ENCODE measurements at regions of chr14 and their contacts with region 1.

Region 1: DNA sequence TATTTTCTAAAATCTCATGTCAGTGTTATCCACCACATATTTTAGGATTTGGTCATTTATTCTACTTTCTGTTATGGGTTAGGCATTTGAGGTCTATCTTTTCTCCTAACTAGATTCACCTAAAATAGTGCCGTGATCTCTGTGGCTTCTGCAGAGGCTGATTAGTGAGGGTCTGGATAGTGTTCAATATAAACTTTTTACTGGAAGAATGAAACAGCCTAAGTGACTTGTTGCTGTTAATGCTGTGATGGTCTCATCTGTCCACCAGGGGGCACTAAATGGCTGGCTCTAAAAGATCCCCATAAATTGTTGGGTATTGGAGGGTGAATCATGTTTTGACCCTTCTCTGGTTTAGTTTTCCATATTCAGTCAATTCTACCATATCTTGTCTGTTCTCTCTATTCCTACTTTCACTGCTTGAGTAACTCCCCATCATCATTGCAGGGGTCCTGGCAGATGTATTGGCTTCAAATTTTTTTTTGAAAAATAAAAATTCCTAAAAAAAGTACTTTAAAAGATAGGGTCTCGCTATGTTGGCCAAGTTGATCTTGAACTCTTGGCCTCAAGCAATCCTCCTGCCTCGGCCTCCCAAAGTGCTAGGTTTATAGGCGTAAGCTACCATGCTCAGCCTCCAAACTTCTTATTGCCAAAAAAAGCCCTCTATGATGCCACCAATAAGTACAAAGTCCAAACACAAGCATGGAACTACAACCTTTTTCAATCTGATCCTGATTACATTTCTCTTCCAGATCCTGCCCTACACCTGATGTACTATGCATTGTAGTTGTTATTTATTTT is 6.9 kb downstream of the PABPN1 start:
- DNase-seq: peak; percentile 79
- ATAC-seq: peak; percentile 72
- H3K4me3 ChIP-seq: no peak overlapping the region
- H3K27ac ChIP-seq: no peak overlapping the region
- H3K4me1 ChIP-seq: peaks cover 4% of the 10 kb centered on the region
- H3K27me3 ChIP-seq: no peaks in the 10 kb centered on the region; the same call in 1 of the 2 replicates
- CTCF ChIP-seq: peak; percentile 92

Region 2: DNA sequence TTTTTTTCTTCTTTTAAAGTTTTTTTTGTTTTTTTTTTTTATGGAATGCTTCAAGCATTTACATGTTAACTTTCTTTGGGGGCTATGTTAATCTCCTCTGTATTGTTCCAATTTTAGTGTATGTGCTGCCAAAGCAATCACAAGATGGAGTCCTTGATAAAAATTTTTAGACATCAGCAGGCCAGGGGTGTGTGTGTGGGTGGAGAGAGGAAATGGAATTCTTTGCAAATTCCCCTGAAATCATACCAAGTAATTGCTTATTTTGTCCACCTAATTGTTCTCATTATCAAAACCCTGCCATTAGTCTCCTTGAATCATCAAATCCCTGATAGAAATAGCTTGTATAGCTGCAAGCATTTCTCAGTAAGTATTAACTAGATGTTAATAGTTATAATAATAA is 68.7 kb before region 1 on chr14:
- CTCF ChIA-PET with region 1: no interaction called
- POLR2A ChIA-PET with region 1: no interaction called
- intact Hi-C with region 1: loop called (anchors 2 kb)
- DNase-seq: no peak
- ATAC-seq: no peak
- H3K4me3 ChIP-seq: no peak overlapping the region
- H3K27ac ChIP-seq: no peak overlapping the region
- H3K4me1 ChIP-seq: no peaks in the 10 kb centered on the region
- H3K27me3 ChIP-seq: peaks cover 25% of the 10 kb centered on the region
- CTCF ChIP-seq: no peak

Region 3: GRCh38 chr14:23281247-23281646 is 46.9 kb before region 1 on chr14:
- CTCF ChIA-PET with region 1: no interaction called
- POLR2A ChIA-PET with region 1: no interaction called
- intact Hi-C with region 1: no loop called
- DNase-seq: no peak
- ATAC-seq: no peak
- H3K4me3 ChIP-seq: no peak overlapping the region
- H3K27ac ChIP-seq: no peak overlapping the region
- H3K4me1 ChIP-seq: peaks cover 13% of the 10 kb centered on the region
- H3K27me3 ChIP-seq: no peaks in the 10 kb centered on the region
- CTCF ChIP-seq: no peak

Region 4: GRCh38 chr14:23379366-23380196 is 51.4 kb after region 1 on chr14:
- CTCF ChIA-PET with region 1: interaction called, 6 read pairs
- POLR2A ChIA-PET with region 1: no interaction called
- intact Hi-C with region 1: loop called (anchors 1 kb)
- DNase-seq: peak; percentile 81
- ATAC-seq: peak; percentile 91
- H3K4me3 ChIP-seq: no peak overlapping the region
- H3K27ac ChIP-seq: no peak overlapping the region
- H3K4me1 ChIP-seq: no peaks in the 10 kb centered on the region
- H3K27me3 ChIP-seq: peaks cover 27% of the 10 kb centered on the region
- CTCF ChIP-seq: peak; percentile 94

Region 5: DNA sequence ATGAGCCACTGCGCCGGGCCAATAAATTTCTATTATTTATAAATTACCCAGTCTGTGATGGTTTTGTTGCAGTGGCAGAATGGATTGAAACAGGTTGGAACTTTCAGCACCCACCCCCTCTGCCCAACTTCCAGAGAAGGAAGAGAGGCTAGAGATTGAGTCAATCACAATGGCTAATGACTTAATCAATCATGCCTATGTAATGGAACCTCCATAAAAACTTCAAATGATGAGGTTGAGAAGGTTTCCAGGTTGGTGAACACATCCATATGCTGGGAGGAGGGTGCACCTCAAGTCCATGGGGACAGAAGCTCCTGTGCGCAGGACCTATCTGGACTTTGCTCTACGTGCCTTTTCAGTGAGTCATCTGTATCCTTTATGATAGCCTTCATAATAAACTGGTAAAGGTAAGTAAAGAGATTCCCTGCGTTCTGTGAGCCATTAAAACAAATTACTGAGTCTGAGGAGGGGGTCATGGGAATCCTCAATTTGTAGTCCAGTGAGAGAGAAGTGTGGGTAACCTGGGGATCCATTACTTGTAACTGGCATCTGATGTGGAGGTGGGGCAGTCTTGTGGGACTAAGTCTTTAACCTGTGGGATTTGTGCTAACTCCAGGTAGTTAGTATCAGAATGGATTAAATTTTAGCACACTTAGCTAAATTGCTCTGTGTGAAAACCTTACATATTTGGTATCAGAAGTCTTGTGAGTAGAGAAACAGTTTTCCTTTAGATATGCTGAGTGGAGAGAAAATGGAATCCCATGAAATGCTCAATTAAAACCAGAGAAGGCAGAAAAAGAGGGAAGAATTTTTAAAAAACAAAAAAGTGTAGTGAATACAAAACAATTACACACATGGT is 129.7 kb after region 1 on chr14:
- CTCF ChIA-PET with region 1: interaction called, 3 read pairs
- POLR2A ChIA-PET with region 1: no interaction called
- intact Hi-C with region 1: loop called (anchors 5 kb)
- DNase-seq: peak; percentile 61
- ATAC-seq: peak; percentile 48; the same call in 1 of the 2 replicates
- H3K4me3 ChIP-seq: no peak overlapping the region
- H3K27ac ChIP-seq: no peak overlapping the region
- H3K4me1 ChIP-seq: peaks cover 7% of the 10 kb centered on the region; the same call in 1 of the 2 replicates
- H3K27me3 ChIP-seq: 0 out of 2 replicates have a peak, but pooled peaks cover 16% of the 10 kb centered on the region
- CTCF ChIP-seq: no peak

Measured in PC-3 (cell line).